Activated T-helper 1 cell treated with anti-CD3 and anti-CD28 coated beads, Interleukin-12 subunit alpha, Interleukin-12 subunit beta, Interleukin-2, Interleukin-4 antibody, amounts not matched to agents 30 ng/mL and 10 ng/mL and 1 ng/mL, durations not matched to agents 14 hours and 24 hours and 36 hours (primary cell): ENCODE measurements at regions of chr19 and their contacts with region 1.

Region 1: DNA sequence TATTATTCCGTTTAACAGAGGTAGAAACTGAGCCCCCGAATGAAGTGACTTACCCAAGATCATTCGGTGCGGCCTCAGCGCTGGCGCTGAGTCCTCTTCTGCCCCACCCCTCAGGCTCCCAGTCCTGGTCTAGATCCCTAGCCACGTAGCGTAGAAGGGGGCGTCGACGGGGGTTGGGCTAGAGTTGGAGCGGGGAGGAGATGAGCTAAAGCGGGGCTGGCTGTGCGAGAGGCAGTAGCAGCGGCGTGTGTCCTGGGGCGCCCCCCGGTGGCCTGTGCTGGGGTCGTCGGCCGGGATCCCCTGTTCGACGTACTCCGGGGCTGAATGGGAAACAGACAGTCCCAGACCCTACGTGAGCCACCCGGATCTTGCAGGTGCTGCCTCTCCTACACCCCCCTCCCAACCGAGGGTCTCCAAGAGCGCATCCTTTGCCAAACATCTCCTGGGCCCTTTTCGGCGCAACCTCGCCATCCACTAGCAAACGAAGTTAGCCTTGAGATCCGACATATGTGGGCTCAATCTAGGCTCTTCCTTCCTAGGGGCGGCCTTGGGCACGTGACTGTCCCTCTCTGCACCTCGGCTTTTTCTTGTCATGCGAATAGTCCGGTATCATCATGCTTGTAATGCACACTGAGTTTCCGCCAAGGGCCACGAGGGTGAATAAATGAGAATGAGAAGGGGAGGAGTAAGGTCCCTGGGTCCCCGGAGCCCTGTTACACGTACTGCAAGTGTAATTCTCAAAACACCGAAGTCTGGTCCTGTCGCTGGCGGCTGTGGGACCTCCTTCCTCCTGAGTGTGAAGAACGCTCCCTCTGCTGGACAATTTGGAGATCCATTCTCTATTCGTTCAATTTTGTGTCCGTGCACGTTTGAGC is 47.7 kb downstream of the CYP4F22 start:
- DNase-seq: peak; percentile 92
- H3K4me3 Mint-ChIP-seq: peak overlapping the region; percentile 82
- H3K27ac Mint-ChIP-seq: peak overlapping the region; percentile 83
- H3K4me1 Mint-ChIP-seq: peaks cover 25% of the 10 kb centered on the region
- H3K27me3 Mint-ChIP-seq: peaks cover 9% of the 10 kb centered on the region

Region 2: DNA sequence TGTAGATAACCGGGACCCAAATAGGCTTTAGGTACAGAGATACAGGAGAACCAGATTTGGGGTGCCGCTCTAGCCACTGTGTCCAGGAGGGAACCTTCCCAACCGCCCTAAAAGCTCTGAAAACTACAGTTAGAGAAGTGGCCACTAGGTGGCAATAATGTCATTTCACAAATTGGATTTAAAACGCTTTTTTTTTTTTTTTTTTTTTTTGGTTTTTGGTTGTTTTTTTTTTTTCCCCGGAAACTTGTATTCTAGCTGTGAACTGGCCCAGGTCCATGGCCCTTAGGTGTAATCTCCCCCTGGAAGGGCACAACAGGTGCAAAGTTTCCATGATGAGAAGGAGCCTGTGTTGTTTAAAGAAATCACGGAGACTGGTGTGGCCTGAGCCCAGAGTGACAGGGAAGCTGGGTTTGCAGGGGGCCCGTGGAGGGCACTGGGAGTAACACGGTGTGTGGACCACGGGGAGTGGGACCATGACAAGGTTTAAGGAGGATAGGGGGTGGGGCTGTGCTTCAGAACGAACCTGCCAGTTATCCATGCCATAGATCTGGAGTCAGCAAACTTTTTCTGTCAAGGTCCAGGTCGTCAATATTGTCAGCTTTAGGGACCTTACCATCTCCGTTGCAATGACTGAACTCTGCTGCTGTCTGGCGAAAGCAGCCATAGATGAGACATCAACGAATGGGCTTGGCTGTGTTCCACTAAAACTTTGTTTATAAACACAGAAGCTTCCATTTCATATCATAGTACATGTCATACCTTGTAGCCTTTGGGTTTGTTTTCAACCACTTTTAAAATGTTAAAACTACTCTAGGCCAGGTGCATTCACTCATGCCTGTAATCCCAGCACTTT is 463.9 kb before region 1 on chr19:
- intact Hi-C with region 1: loop called (anchors 1 kb)
- DNase-seq: peak; percentile 49
- H3K4me3 Mint-ChIP-seq: no peak overlapping the region
- H3K27ac Mint-ChIP-seq: no peak overlapping the region
- H3K4me1 Mint-ChIP-seq: peaks cover 5% of the 10 kb centered on the region
- H3K27me3 Mint-ChIP-seq: peaks cover 8% of the 10 kb centered on the region

Region 3: GRCh38 chr19:15177269-15178116 is 378.5 kb before region 1 on chr19:
- intact Hi-C with region 1: loop called (anchors 1 kb)
- DNase-seq: peak; percentile 74
- H3K4me3 Mint-ChIP-seq: peak overlapping the region; percentile 13
- H3K27ac Mint-ChIP-seq: no peak overlapping the region
- H3K4me1 Mint-ChIP-seq: peaks cover 6% of the 10 kb centered on the region
- H3K27me3 Mint-ChIP-seq: peaks cover 6% of the 10 kb centered on the region

Region 4: GRCh38 chr19:15332311-15332996 is 223.5 kb before region 1 on chr19 and contains the start of gene BRD4:
- intact Hi-C with region 1: loop called (anchors 1 kb)
- DNase-seq: peak; percentile 78
- H3K4me3 Mint-ChIP-seq: peak within 1 kb of the TSS; percentile 98
- H3K27ac Mint-ChIP-seq: peak within 1 kb of the TSS; percentile 98
- H3K4me1 Mint-ChIP-seq: peaks cover 35% of the 10 kb centered on the region
- H3K27me3 Mint-ChIP-seq: no peaks in the 10 kb centered on the region
- total RNA-seq, gene BRD4: 122 and 129 TPM in 2 replicates

Region 5: DNA sequence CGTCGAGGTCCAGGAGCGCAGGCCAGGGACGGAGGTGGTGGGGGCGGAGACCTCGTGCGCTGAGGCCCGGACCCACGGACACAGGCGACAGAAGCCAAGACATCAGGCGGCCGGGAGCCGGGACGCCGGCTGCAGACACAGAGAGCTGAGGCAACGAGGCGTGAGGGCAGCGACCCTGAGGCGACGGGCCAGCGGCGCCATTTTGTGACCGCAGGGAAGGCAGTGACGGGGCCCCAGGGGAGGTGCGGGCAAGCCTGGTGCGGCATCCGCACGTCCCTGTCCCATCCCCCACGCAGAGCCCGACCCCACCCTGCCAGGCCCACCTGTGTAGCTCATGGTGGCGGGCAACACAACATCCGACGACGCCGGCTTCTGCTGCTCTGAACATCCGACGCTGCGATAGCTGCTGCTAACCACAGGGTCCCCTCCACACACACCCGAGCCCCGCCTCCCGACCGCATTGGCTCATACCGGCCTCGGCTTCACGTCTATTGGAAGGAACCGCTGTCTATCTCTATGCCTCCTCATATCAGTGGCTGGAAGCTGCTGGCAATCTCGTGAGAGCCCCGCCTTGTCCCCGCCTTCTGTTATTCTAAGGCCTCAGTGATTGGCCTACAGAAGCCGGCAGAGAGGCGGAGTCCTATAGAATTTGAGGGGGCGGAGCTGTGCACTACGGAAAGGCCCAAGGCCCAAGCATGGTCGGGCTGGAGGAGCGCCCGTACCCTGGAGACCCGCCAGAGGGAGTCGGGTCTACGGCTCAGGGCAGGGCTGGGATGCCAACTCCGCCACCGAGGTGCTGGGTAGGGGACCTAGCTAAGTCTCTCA is 137.2 kb before region 1 on chr19 and contains the start of gene AKAP8L:
- intact Hi-C with region 1: loop called (anchors 1 kb)
- DNase-seq: peak; percentile 98
- H3K4me3 Mint-ChIP-seq: peak within 1 kb of the TSS; percentile 98
- H3K27ac Mint-ChIP-seq: peak within 1 kb of the TSS; percentile 89
- H3K4me1 Mint-ChIP-seq: peaks cover 18% of the 10 kb centered on the region
- H3K27me3 Mint-ChIP-seq: no peaks in the 10 kb centered on the region
- total RNA-seq, gene AKAP8L: 73.8 and 77.9 TPM in 2 replicates

Region 6: DNA sequence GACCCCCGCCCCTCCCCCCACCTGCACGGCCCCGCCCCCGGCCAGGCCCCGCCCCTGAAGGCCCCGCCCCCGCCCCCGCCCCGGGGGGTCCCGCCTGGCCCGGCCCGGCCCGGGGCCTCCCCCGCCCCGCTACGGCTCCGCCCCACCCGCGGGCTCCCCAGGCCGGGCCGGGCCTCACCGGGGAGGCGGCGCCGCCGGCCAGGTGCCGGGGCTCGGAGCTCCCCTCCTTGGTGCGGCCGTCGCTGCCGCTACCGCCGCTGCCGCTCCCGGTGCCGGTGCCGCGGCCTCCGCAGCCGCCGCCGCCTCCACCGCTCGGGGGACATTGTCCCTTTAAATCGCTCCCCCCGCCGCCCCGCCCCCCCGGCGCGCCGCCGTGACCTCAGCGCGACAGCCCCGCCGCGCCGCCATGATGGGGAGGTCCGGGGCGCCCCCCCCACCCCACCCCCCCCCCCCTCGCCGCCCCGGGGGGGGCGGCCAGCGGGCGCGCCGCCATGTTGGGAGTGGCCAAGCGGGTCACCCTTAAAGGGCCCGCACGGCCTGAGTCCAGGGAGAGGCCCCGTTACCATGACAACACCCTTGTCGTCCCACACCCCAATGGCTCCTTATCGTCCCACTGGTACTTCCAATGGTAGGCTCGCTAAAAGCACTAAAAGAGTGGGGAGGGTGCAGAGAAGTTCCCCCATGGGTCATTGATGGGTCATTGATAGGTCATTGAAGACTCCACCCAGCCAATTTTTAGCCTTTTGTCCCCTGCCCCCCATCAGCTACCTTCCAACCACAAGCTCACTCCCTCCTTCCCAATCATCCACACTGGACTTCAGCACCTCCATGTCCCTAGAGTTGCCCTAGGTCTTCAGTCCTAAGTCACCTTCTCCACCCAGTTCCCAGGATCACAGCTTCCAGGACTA is 106.1 kb before region 1 on chr19 and contains the start of gene WIZ:
- intact Hi-C with region 1: no loop called
- DNase-seq: peak; percentile 74
- H3K4me3 Mint-ChIP-seq: peak within 1 kb of the TSS; percentile 86
- H3K27ac Mint-ChIP-seq: peak within 1 kb of the TSS; percentile 98
- H3K4me1 Mint-ChIP-seq: peaks cover 32% of the 10 kb centered on the region
- H3K27me3 Mint-ChIP-seq: peaks cover 3% of the 10 kb centered on the region
- total RNA-seq, gene WIZ: 37.6 and 38.7 TPM in 2 replicates

Region 7: GRCh38 chr19:15511671-15512424 is 44.1 kb before region 1 on chr19:
- intact Hi-C with region 1: loop called (anchors 5 kb)
- DNase-seq: no peak
- H3K4me3 Mint-ChIP-seq: no peak overlapping the region
- H3K27ac Mint-ChIP-seq: no peak overlapping the region
- H3K4me1 Mint-ChIP-seq: peaks cover 24% of the 10 kb centered on the region
- H3K27me3 Mint-ChIP-seq: peaks cover 28% of the 10 kb centered on the region

Region 8: GRCh38 chr19:15584541-15585115 is 28.6 kb after region 1 on chr19:
- intact Hi-C with region 1: no loop called
- DNase-seq: peak; percentile 67
- H3K4me3 Mint-ChIP-seq: no peak overlapping the region
- H3K27ac Mint-ChIP-seq: no peak overlapping the region
- H3K4me1 Mint-ChIP-seq: no peaks in the 10 kb centered on the region
- H3K27me3 Mint-ChIP-seq: peaks cover 8% of the 10 kb centered on the region

Region 9: DNA sequence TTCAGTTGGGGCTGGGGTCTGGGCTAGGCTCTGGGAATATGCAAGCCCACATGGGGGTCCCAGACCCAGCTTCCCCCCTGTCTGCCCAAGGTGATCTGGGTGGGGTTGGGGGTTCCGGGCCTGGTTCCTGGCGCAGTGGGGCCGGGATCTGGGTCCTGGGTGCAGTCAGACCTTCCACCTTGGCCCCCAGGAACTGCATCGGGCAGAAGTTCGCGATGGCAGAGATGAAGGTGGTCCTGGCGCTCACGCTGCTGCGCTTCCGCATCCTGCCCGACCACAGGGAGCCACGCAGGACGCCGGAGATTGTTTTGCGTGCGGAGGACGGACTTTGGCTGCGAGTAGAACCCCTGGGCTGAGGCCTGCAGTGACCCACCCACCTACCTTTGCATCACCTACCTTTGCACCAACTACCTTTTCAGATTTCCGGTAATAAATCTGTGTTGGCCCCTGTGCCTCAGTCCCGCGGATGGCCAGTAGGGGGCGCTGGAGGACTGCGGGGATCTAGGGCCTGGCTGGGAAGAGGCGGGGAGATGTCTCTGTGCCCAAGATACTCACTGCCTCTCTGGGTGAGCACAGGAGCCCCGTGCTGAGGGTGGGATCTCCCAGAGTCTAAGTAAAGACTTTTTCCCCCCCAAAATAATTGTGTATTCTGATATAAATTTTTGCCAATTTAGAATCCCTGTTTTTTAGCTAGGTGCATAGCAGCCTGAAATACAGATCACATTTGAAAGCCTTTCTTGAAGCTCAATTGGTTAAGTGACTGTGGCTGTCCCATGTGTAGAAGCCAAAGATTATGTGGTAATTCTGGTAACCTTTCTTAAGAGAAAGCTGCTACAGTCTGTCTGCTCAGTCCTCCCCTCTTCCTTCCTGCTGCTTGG is 73.2 kb after region 1 on chr19:
- intact Hi-C with region 1: no loop called
- DNase-seq: peak; percentile 74
- H3K4me3 Mint-ChIP-seq: no peak overlapping the region
- H3K27ac Mint-ChIP-seq: no peak overlapping the region
- H3K4me1 Mint-ChIP-seq: no peaks in the 10 kb centered on the region
- H3K27me3 Mint-ChIP-seq: peaks cover 7% of the 10 kb centered on the region

Region 10: GRCh38 chr19:15836595-15837337 is 280.8 kb after region 1 on chr19:
- intact Hi-C with region 1: loop called (anchors 1 kb)
- DNase-seq: peak; percentile 94
- H3K4me3 Mint-ChIP-seq: peak overlapping the region; percentile 92
- H3K27ac Mint-ChIP-seq: peak overlapping the region; percentile 99
- H3K4me1 Mint-ChIP-seq: peaks cover 16% of the 10 kb centered on the region
- H3K27me3 Mint-ChIP-seq: no peaks in the 10 kb centered on the region